Activated B cell treated with CpG ODN at 0.5 μM for 24 hours (primary cell): ENCODE measurements at regions of chr16 and their contacts with region 1.

Region 1: GRCh38 chr16:1677802-1678496 is at the start of gene JPT2:
- DNase-seq: peak; percentile 92
- ATAC-seq: peak; percentile 96
- H3K4me3 Mint-ChIP-seq: peak within 1 kb of the TSS; percentile 89
- H3K27ac Mint-ChIP-seq: peak within 1 kb of the TSS; percentile 76
- H3K4me1 Mint-ChIP-seq: peaks cover 29% of the 10 kb centered on the region
- H3K27me3 Mint-ChIP-seq: no peaks in the 10 kb centered on the region
- CTCF ChIP-seq: no peak
- total RNA-seq, gene JPT2: 43.4 and 48.7 TPM in 2 replicates

Region 2: DNA sequence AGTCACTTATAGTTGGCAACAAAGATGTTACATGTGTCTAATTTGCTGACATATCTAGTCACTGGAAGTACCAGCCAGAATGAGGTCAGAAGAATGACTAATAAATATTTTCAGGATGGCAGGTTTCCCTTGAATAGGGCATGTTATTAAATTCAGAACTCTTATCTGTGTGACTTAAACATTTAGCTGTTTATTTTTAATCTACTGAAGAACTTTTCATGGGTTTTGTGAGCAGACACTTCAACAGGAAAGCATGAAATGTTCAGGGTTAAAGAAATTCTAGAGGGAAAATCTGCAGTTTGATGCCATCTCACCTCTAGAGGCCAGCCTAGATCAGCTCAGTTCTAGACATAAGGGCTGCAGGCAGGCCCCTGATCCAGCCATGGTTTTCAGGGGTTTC is 13.3 kb after region 1 on chr16:
- CTCF ChIA-PET with region 1: no interaction called
- POLR2A ChIA-PET with region 1: no interaction called
- intact Hi-C with region 1: no loop called
- DNase-seq: no peak
- ATAC-seq: no peak
- H3K4me3 Mint-ChIP-seq: no peak overlapping the region
- H3K27ac Mint-ChIP-seq: no peak overlapping the region
- H3K4me1 Mint-ChIP-seq: no peaks in the 10 kb centered on the region
- H3K27me3 Mint-ChIP-seq: no peaks in the 10 kb centered on the region
- CTCF ChIP-seq: no peak

Region 3: GRCh38 chr16:1723450-1724147 is 45.6 kb after region 1 on chr16:
- CTCF ChIA-PET with region 1: no interaction called
- POLR2A ChIA-PET with region 1: no interaction called
- intact Hi-C with region 1: loop called (anchors 1 kb)
- DNase-seq: no peak
- ATAC-seq: peak; percentile 59
- H3K4me3 Mint-ChIP-seq: peak overlapping the region; percentile 60
- H3K27ac Mint-ChIP-seq: peak overlapping the region; percentile 76
- H3K4me1 Mint-ChIP-seq: peaks cover 72% of the 10 kb centered on the region
- H3K27me3 Mint-ChIP-seq: no peaks in the 10 kb centered on the region
- CTCF ChIP-seq: peak; percentile 95